ENCODE measurements at regions of chr9 and their contacts with region 1.

Region 1: DNA sequence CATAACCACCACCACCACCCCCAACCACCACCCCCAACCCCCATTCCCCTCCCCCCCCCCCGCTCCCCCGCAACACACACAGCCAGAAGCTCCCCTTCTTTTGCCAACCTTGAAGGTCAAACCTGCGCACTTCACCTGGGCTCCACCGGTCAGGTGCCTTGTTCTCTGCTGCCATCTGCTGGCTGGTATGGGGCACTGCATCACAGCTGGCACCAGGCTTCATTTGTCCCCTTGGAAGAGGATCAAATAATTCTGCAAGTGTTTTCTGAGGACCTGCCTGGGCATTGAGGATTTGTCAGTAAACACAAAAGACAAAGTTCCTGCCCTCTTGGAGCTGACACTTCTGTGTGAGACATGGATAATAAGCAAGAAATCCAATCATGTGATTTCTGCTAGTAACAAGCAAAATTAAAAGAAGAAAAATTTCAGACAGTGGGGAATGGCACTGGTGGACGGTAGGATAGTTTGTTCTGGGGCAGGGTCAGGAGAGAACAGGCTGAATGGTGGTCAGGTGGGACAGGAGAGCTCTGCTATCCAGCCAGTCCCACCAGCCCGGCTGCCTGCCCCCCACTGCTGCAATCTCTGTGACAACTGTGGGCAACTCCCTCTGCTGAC is 55.6 kb upstream of the LMX1B start:
- DNase-seq: peak; percentile 46 to 77
- H3K4me3 ChIP-seq: no peak overlapping the region
- H3K4me1 ChIP-seq: no peaks in the 10 kb centered on the region
- H3K27me3 ChIP-seq: peaks cover 41% of the 10 kb centered on the region

Region 2: DNA sequence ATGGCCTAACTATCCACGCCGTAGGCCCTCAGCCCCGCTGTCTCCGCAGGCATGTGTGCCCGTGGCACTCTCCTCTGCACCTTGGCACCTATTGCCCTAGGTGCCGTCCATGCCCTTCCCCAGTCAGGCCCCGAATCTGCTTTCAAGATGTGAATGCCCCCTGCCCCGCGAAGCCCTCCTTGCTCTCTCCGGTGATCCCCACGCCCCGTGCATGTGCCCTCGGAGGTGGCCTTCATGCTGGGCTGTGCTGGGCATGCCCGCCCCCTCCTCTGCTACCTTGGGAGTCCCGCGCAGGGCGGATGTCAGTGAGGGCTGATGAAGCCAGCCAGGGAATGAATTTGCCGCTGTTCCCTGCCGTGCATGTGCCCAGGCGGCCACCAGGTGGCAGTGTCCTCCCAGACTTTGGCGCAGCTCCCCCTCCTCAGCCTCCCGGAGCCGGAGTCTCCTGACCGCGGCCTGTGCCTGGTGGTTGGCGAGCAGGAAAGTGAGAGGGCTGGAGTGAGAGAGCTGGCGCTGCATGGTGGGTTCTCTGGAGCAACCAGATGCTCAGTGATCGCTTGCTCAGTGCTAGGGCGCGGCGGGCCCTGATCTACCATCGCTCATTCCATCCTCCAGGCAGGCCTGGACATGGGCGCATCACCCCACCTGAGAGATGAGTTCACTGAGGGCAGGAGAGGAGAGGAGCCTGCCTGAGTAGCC is 57.3 kb before region 1 on chr9:
- in situ Hi-C with region 1: loop called (anchors 5 kb)
- DNase-seq: peak; percentile 70 to 89
- H3K4me3 ChIP-seq: no peak overlapping the region
- H3K4me1 ChIP-seq: 0 out of 2 replicates have a peak, but pooled peaks cover 2% of the 10 kb centered on the region
- H3K27me3 ChIP-seq: no peaks in the 10 kb centered on the region

Measured in HAP-1 (cell line).